Right ventricle myocardium inferior (tissue), 1 donor: ENCODE measurements at regions of chr16 and their contacts with region 1.

Region 1: DNA sequence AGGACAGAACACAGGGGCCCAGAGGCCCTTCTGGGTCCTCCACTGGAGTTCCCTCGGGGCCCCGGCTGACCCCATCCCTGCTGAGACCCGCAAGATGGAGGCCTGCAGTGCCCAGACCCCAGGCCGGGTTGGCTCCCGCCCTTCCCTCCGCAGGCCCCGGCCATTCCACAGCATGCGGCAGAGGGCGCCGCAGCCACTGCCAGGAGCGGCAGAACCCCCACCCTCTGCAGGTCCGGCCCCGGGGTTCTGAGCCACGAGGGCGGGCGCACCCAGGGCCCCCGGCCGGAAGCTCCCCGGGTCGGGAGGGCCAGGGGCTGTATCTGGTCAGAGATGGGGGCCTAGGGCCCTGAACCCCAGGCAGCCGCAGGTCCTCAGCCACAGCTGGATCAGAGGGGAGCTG is 2.4 kb upstream of the PERCC1 start:
- DNase-seq: no peak
- ATAC-seq: no peak

Region 2: DNA sequence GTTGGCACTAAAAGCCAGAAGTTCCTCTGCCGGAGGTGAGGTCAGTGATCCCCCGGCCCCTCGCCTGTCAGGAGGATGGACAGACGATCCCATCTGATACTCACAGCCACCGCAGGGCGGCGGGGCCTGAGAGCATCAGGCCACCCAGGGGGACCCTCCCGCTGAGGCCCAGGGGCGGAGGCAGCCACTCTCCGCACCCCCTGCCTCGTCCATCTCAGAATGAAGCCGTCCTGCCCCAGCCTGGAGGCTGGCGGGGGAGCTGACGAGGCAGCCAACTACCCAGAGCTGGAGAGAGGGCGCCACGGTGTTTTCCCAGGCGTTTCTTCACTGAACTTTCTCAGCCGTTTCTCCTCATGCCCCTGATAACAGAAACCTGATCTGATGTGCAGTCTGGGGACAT is 150.0 kb before region 1 on chr16:
- intact Hi-C with region 1: no loop called
- DNase-seq: no peak
- ATAC-seq: no peak

Region 3: GRCh38 chr16:1474796-1475551 is 46.5 kb after region 1 on chr16 and contains the start of gene CLCN7:
- intact Hi-C with region 1: loop called (anchors 5 kb)
- DNase-seq: peak; percentile 96
- ATAC-seq: peak; percentile 96
- total RNA-seq, gene CLCN7: 49.5 TPM